Transverse colon (tissue), 4 donors: ENCODE measurements at regions of chr13 and their contacts with region 1.

Region 1: DNA sequence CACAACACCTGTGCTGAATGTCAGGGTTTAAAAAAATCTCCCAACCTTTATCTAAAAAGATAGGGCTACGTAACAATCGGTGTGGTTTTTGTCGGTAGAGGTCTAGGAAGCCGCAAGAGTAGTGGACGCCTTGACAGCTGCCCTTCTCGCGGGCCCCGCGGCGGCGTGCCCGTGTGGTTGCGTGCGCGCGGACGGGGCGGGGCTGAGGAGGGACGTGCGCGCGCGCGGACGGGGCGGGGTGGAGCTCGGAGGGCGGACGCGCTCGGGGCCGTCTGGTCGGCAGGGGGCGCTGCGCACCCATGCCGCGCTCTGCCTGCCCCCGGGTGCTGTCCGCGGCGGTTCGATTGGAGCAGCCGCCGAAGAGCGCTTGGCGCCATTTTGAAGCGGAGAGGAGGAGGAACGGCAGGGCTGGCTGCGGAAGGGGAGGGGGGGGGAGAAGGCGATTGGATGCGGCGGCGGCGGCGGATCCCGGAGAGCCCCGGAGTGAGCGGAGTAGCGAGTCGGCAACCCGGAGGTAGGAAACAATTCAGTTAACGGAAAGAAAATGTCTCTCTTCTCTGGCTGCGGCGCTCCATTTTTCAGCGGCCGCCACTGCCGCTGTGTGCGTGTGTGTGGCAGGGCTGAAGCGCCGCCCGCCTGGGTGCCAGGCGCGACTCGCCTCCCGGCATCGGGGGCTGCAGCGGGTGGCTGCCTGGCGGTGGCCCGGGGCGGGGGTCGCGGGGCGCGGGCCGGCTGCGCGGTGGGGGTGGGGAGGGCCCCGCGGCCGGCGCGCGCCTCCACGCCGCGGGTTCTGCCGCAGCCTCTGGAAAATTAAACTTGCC is at the start of gene PDS5B:
- DNase-seq: peak; percentile 95
- H3K4me3 ChIP-seq: peak within 1 kb of the TSS; percentile 74 to 88 (median 80)
- H3K27ac ChIP-seq: peak within 1 kb of the TSS; percentile 96 to 98 (median 97)
- H3K4me1 ChIP-seq: peaks cover 0 to 36% (median 23%) of the 10 kb centered on the region in 4 donors
- H3K27me3 ChIP-seq: no peaks in the 10 kb centered on the region
- CTCF ChIP-seq: peak; percentile 68 to 90 (median 85)
- EP300 ChIP-seq: no peak
- POLR2A ChIP-seq: peak; percentile 66
- total RNA-seq, gene PDS5B: 10.0 to 91.3 (median 32.1) TPM

Region 2: GRCh38 chr13:32515246-32515645 is 71.0 kb before region 1 on chr13:
- in situ Hi-C with region 1: no loop called
- intact Hi-C with region 1: no loop called
- DNase-seq: no peak
- H3K4me3 ChIP-seq: no peak overlapping the region
- H3K27ac ChIP-seq: no peak overlapping the region
- H3K4me1 ChIP-seq: no peaks in the 10 kb centered on the region
- H3K27me3 ChIP-seq: no peaks in the 10 kb centered on the region
- CTCF ChIP-seq: no peak
- EP300 ChIP-seq: no peak
- POLR2A ChIP-seq: no peak

Region 3: DNA sequence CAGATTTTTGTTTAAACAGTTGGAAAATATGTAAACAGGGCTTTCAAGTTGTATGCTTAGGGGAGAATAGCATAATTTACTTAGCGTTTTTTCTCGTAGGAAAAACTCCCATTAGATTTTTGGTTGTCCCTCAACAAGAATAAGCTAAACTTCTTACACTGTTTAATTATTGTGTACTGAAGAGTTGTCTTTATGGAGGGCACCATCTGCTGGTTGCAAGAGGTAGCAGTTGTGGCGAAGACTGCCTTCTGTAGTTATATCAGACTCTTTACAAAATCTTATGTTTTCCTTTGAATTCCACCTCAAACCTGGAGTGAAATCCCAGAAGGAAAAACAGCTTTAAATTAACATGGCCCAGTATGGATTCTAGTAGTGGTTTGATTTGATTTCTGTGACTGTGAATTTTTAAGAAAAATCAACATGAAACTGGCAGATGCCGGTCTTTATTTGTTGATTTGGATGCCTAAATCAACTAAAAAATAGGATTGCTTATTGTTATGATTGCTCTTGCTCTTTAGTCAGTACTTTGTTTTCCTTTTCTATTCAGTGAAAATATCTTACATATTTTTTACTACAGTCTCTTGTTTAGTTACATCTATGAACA is 53.3 kb after region 1 on chr13:
- in situ Hi-C with region 1: loop called in 2 of 4 experiments (anchors 5 to 10 kb)
- intact Hi-C with region 1: loop called (anchors 2 kb)
- DNase-seq: peak; percentile 57
- H3K4me3 ChIP-seq: no peak overlapping the region
- H3K27ac ChIP-seq: no peak overlapping the region
- H3K4me1 ChIP-seq: peaks cover 0 to 34% (median 13%) of the 10 kb centered on the region in 4 donors
- H3K27me3 ChIP-seq: no peaks in the 10 kb centered on the region
- CTCF ChIP-seq: peak; percentile 68 to 79 (median 77)
- EP300 ChIP-seq: no peak
- POLR2A ChIP-seq: no peak

Region 4: GRCh38 chr13:32752997-32753606 is 166.8 kb after region 1 on chr13:
- in situ Hi-C with region 1: no loop called
- intact Hi-C with region 1: no loop called
- DNase-seq: no peak
- H3K4me3 ChIP-seq: no peak overlapping the region
- H3K27ac ChIP-seq: no peak overlapping the region
- H3K4me1 ChIP-seq: peaks cover 0 to 3% (median 0%) of the 10 kb centered on the region in 4 donors
- H3K27me3 ChIP-seq: no peaks in the 10 kb centered on the region
- CTCF ChIP-seq: no peak
- EP300 ChIP-seq: no peak
- POLR2A ChIP-seq: no peak

Region 5: GRCh38 chr13:33017323-33017929 is 431.1 kb after region 1 on chr13:
- in situ Hi-C with region 1: loop called in 1 of 4 experiments (anchors 25 kb)
- intact Hi-C with region 1: no loop called
- DNase-seq: peak; percentile 44
- H3K4me3 ChIP-seq: peak overlapping the region; percentile 27 to 62 (median 43)
- H3K27ac ChIP-seq: peak overlapping the region; percentile 42 to 75 (median 63)
- H3K4me1 ChIP-seq: peaks cover 0 to 15% (median 11%) of the 10 kb centered on the region in 4 donors
- H3K27me3 ChIP-seq: peaks cover 30% of the 10 kb centered on the region
- CTCF ChIP-seq: peak; percentile 45 to 62 (median 52)
- EP300 ChIP-seq: no peak
- POLR2A ChIP-seq: no peak